Activated T-helper 1 cell treated with anti-CD3 and anti-CD28 coated beads, Interleukin-12 subunit alpha, Interleukin-12 subunit beta, Interleukin-2, Interleukin-4 antibody, amounts not matched to agents 30 ng/mL and 10 ng/mL and 1 ng/mL, durations not matched to agents 14 hours and 24 hours and 36 hours (primary cell): ENCODE measurements at regions of chr4 and their contacts with region 1.

Region 1: GRCh38 chr4:120718979-120719566 is 203.5 kb downstream of the PRDM5 start:
- DNase-seq: no peak
- H3K4me3 Mint-ChIP-seq: no peak overlapping the region
- H3K27ac Mint-ChIP-seq: no peak overlapping the region
- H3K4me1 Mint-ChIP-seq: no peaks in the 10 kb centered on the region
- H3K27me3 Mint-ChIP-seq: peaks cover 16% of the 10 kb centered on the region

Region 2: DNA sequence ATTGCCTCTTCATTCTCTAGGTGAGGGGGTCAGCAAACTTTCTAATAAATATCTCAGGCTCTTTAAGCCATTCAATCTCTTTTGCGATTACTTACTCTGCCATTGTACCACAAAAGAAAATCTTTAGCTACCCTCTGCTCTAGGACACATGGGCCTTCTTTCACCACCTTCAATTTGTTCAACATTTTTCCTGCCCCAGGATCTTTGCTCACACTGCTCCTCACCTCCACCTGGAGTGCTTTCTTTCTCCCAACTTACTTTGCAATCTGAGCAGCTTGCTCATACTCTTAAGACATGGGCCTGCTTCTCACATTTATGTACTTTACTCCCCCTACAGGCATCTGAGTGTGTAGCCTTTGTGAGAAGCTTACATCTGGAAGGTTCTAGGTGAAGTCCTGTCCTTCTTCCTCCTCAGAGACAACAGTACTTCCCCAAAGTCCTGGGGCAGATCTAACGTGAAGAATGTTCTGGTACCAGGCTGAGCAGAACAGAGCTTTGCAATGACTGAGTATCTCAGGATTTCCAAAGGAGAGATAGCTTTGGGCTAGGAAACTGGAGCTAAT is 258.4 kb after region 1 on chr4:
- intact Hi-C with region 1: loop called (anchors 1 kb)
- DNase-seq: no peak
- H3K4me3 Mint-ChIP-seq: no peak overlapping the region
- H3K27ac Mint-ChIP-seq: no peak overlapping the region
- H3K4me1 Mint-ChIP-seq: no peaks in the 10 kb centered on the region
- H3K27me3 Mint-ChIP-seq: no peaks in the 10 kb centered on the region

Region 3: DNA sequence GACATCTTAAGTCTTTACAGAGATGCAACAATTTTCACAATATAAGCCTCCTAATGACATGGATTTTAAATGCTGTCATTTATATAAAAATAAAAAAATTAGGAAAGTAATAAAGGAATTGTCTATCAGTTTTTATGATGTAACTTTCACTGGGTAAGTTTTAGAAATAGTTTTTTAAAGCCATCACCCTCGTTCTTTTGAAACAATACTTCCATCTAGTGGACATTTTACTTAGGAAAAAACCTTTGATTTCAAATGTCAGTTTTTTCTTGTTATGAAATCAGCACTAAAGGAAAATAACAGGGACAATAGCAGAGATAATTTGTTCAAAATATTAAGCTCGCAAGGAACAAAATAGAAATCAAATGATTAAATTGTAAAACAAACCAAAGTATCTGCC is 377.6 kb after region 1 on chr4:
- intact Hi-C with region 1: loop called (anchors 1 kb)
- DNase-seq: no peak
- H3K4me3 Mint-ChIP-seq: no peak overlapping the region
- H3K27ac Mint-ChIP-seq: no peak overlapping the region
- H3K4me1 Mint-ChIP-seq: no peaks in the 10 kb centered on the region
- H3K27me3 Mint-ChIP-seq: peaks cover 21% of the 10 kb centered on the region

Region 4: GRCh38 chr4:121554382-121554781 is 835.3 kb after region 1 on chr4:
- intact Hi-C with region 1: no loop called
- DNase-seq: no peak
- H3K4me3 Mint-ChIP-seq: no peak overlapping the region
- H3K27ac Mint-ChIP-seq: no peak overlapping the region
- H3K4me1 Mint-ChIP-seq: no peaks in the 10 kb centered on the region
- H3K27me3 Mint-ChIP-seq: peaks cover 7% of the 10 kb centered on the region